ENCODE measurements at regions of chr14 and their contacts with region 1.

Region 1: DNA sequence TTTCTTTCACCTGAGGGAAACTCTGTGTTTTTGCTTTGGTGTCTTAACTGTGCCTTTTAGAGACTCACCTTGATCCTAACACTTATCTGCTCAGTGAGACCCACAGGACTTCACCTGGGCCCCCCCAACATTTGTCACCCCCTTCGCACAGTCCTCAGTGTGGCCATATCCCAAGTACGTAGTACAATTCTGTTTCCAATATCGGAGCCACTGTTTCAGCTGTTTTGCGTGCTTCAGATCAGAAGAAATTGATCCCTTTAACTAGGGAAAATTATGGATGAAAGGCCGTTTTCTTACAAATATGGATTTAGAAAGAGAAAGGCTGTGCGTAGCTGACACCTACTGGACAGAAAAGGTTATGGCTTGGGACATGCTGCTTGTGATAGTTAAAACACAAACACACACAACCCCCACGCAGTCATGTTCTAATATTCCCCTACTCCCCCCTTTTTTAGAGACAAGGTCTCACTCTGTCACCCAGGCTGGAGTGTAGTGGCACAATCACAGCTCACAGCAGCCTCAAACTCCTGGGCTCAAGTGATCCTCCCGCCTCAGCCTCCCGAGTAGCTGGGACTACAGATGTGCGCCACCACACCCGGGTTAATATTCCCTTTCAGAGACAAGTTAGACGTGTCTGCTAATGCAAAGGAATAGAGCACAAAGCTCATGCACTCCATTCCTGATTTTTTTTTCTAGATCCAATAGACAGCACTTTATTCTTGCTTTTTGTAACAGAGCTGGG is 3.6 kb upstream of the SLC7A8 start:
- DNase-seq: peak; percentile 76
- ATAC-seq: peak; percentile 57
- H3K4me3 ChIP-seq: no peak overlapping the region
- H3K27ac ChIP-seq: no peak overlapping the region
- H3K4me1 ChIP-seq: peaks cover 13% of the 10 kb centered on the region
- H3K27me3 ChIP-seq: no peaks in the 10 kb centered on the region
- CTCF ChIP-seq: peak; percentile 87

Region 2: DNA sequence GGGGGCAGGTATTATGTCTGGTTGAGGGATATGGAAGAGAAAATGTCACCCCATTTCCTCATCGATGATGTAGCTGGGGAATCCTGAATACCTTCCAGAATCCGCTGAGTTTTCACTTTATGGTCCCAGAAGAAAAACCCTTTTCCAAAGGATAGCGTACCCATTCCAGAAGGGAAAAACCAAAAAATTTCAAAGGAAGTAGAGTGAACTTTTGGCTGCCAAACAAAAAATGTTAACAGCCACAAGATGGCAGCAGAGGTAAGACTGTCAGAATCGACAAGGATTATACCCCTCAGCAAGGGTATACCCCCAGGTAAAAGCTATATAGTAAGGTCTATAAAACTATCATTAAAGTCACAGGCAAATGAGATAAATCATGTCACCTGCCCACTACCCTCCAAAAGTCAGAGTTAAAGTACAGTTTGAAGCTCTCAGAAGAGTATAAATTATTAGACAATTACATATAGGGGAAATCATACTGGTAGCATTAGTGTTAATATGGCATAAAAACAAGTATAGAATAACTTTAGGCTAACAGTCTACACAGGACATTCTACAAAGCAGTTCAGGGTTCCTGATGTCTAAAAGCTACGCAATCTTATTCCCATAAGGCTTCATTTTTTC is 110.2 kb before region 1 on chr14:
- CTCF ChIA-PET with region 1: no interaction called
- POLR2A ChIA-PET with region 1: no interaction called
- intact Hi-C with region 1: no loop called
- DNase-seq: peak; percentile 62
- ATAC-seq: no peak
- H3K4me3 ChIP-seq: no peak overlapping the region
- H3K27ac ChIP-seq: no peak overlapping the region
- H3K4me1 ChIP-seq: peaks cover 38% of the 10 kb centered on the region
- H3K27me3 ChIP-seq: no peaks in the 10 kb centered on the region
- CTCF ChIP-seq: peak; percentile 83; the same call in 1 of the 2 replicates

Region 3: GRCh38 chr14:23237772-23238594 is 50.9 kb after region 1 on chr14 and contains the start of gene RNF212B:
- CTCF ChIA-PET with region 1: no interaction called
- POLR2A ChIA-PET with region 1: interaction called, 20 read pairs
- intact Hi-C with region 1: no loop called
- DNase-seq: peak; percentile 88
- ATAC-seq: peak; percentile 99
- H3K4me3 ChIP-seq: peak within 1 kb of the TSS; percentile 57
- H3K27ac ChIP-seq: no peak within 1 kb of the TSS
- H3K4me1 ChIP-seq: no peaks in the 10 kb centered on the region
- H3K27me3 ChIP-seq: peaks cover 19% of the 10 kb centered on the region; the same call in 1 of the 2 replicates
- CTCF ChIP-seq: no peak
- total RNA-seq, gene RNF212B: not detected in 2 replicates